ENCODE measurements at regions of chr10 and their contacts with region 1.

Region 1: GRCh38 chr10:89346264-89347254 is 18.8 kb downstream of the IFIT3 start:
- DNase-seq: no peak

Region 2: GRCh38 chr10:89327784-89328441 is 18.6 kb before region 1 on chr10 and contains the start of gene IFIT3:
- intact Hi-C with region 1: loop called (anchors 1 kb)
- DNase-seq: peak; percentile 85
- total RNA-seq, gene IFIT3: 6.8 TPM